ENCODE measurements at regions of chr15 and their contacts with region 1.

Region 1: DNA sequence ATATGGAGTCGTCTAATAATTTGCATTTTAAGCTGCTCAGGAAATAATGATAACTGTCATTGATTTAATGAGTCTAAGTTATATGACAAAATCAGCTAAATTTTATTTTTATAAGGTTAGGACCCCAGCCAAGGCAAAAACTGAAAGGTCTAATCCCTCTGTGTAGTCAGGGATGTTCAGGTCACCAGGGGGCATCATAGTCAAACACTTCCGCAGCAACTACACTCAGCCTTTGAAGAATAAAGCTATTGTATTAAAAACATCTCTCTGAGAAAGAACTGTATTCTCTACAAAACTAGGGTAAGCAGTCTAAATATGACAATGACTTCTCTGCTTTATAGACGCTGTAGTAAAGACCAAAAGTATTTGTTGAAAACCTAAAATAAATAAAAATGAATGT is 15.0 kb downstream of the INTS14 start:
- H3K4me3 Mint-ChIP-seq: no peak overlapping the region
- H3K27ac Mint-ChIP-seq: no peak overlapping the region
- H3K4me1 Mint-ChIP-seq: no peaks in the 10 kb centered on the region
- H3K27me3 Mint-ChIP-seq: no peaks in the 10 kb centered on the region

Region 2: DNA sequence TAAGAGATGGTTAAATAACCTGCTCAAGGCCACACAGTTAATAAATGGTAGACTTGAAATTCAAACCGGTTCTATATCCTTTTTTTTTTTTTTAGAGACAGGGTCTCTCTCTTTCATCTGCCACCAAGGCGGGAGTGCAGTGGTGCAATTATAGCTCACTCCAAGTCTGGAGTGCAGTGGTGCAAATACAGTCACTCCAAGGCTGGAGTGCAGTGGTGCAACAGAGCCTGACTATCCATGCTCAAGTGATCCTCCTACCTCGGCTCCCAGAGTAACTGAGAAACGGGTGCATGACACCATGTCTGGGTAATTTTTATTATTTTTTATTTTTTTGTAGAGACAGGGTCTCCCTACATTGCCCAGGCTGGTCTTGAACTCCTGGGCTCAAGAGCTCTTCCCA is 101.9 kb before region 1 on chr15:
- intact Hi-C with region 1: no loop called
- H3K4me3 Mint-ChIP-seq: no peak overlapping the region
- H3K27ac Mint-ChIP-seq: no peak overlapping the region
- H3K4me1 Mint-ChIP-seq: no peaks in the 10 kb centered on the region
- H3K27me3 Mint-ChIP-seq: no peaks in the 10 kb centered on the region

Region 3: GRCh38 chr15:65583701-65584100 is 12.3 kb before region 1 on chr15:
- intact Hi-C with region 1: no loop called
- H3K4me3 Mint-ChIP-seq: no peak overlapping the region
- H3K27ac Mint-ChIP-seq: no peak overlapping the region
- H3K4me1 Mint-ChIP-seq: peaks cover 6% of the 10 kb centered on the region
- H3K27me3 Mint-ChIP-seq: no peaks in the 10 kb centered on the region

Region 4: GRCh38 chr15:65675551-65675950 is 79.6 kb after region 1 on chr15:
- intact Hi-C with region 1: loop called (anchors 10 kb)
- H3K4me3 Mint-ChIP-seq: no peak overlapping the region
- H3K27ac Mint-ChIP-seq: no peak overlapping the region
- H3K4me1 Mint-ChIP-seq: no peaks in the 10 kb centered on the region
- H3K27me3 Mint-ChIP-seq: no peaks in the 10 kb centered on the region

Region 5: GRCh38 chr15:65916664-65917406 is 320.9 kb after region 1 on chr15:
- intact Hi-C with region 1: no loop called
- H3K4me3 Mint-ChIP-seq: no peak overlapping the region
- H3K27ac Mint-ChIP-seq: no peak overlapping the region
- H3K4me1 Mint-ChIP-seq: peaks cover 5% of the 10 kb centered on the region
- H3K27me3 Mint-ChIP-seq: no peaks in the 10 kb centered on the region

Measured in dendritic cell treated with granulocyte-macrophage colony-stimulating factor and Interleukin-4, amounts not matched to agents 40 ng/mL and 50 ng/mL, for 4 days (primary cell).